A673 (cell line): ENCODE measurements at regions of chr14 and their contacts with region 1.

Region 1: GRCh38 chr14:65958664-65959562 is 527.3 kb upstream of the CCDC196 start:
- DNase-seq: peak; percentile 45
- H3K4me3 ChIP-seq: no peak overlapping the region
- H3K27ac ChIP-seq: no peak overlapping the region
- H3K4me1 ChIP-seq: no peaks in the 10 kb centered on the region
- H3K27me3 ChIP-seq: no peaks in the 10 kb centered on the region
- CTCF ChIP-seq: peak; percentile 59

Region 2: GRCh38 chr14:65824285-65824977 is 134.5 kb before region 1 on chr14:
- CTCF ChIA-PET with region 1: no interaction called
- POLR2A ChIA-PET with region 1: no interaction called
- intact Hi-C with region 1: loop called (anchors 5 kb)
- DNase-seq: peak; percentile 70
- H3K4me3 ChIP-seq: no peak overlapping the region
- H3K27ac ChIP-seq: no peak overlapping the region
- H3K4me1 ChIP-seq: no peaks in the 10 kb centered on the region
- H3K27me3 ChIP-seq: peaks cover 17% of the 10 kb centered on the region
- CTCF ChIP-seq: peak; percentile 92

Region 3: DNA sequence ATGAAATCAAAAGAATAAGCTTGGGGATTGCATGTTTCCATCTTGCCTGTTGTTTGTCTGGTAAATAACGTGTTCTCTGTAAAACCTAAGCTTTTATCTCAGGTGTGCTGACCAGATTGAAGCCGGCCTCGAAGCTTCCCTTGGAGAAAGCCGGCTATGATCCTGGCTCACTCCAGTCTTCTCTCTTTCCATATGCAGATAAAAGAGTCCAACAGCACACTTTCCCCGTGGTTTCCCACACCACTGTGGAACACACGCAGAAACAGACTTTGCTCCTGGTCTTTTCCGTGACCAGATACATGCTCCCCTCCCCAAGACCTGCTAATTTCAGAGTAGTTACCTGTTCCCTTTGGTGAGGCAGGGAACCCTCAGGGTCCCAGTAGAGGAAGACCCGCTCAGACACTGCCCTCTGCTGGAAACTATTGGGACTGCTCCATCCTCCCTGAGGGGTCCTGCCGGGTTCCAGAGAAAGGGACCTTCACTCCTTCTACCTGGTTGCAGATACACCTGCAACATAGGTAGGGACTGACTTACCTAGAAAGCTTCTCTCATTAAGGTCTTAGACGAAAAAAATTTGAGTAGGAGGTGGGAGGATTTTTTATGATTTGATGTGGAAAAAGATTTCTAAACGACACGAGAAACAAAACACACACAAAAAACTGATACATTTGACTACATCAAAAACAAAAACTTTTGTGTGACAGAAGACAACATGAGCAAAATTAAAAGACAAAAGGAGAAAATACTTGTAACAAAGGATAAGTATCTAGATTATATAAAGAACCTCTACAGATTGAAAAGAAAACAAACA is 111.8 kb after region 1 on chr14:
- CTCF ChIA-PET with region 1: interaction called, 4 read pairs
- POLR2A ChIA-PET with region 1: no interaction called
- intact Hi-C with region 1: loop called (anchors 1 kb)
- DNase-seq: peak; percentile 50
- H3K4me3 ChIP-seq: no peak overlapping the region
- H3K27ac ChIP-seq: no peak overlapping the region
- H3K4me1 ChIP-seq: no peaks in the 10 kb centered on the region
- H3K27me3 ChIP-seq: no peaks in the 10 kb centered on the region
- CTCF ChIP-seq: peak; percentile 90

Region 4: DNA sequence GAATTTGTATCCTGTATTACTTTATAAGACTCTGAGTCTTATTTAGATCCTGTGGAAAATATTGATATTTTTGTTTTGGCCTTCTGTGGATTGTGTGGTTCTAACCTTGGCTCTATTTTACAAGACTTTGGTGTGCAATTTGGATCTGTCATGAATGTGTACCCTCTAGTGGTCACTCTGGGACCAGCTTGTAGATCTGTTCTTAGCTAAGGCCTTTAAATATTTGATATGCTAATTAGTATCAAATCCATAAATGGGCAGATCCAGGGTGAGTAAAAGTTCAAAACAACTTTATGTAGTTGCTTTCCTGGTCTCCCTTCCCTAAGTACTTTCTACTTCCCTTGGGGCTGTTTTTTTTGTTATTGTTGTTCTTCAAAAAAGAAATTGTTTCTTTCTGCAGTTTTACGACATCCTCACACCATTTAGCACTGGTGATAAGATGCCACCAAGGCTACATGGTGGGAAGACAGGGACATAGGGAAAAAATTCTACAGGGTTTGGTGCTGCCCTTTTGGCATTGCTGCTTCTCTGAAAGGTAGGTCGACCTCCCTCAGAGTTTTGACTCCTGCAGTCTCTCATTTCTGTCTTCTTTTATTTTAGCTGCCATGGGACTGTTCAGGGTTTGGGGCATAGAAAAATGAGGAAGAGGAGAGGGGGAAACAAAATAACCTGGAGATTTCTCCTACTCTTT is 787.5 kb after region 1 on chr14:
- CTCF ChIA-PET with region 1: no interaction called
- POLR2A ChIA-PET with region 1: no interaction called
- intact Hi-C with region 1: no loop called
- DNase-seq: peak; percentile 56
- H3K4me3 ChIP-seq: no peak overlapping the region
- H3K27ac ChIP-seq: no peak overlapping the region
- H3K4me1 ChIP-seq: no peaks in the 10 kb centered on the region
- H3K27me3 ChIP-seq: no peaks in the 10 kb centered on the region
- CTCF ChIP-seq: peak; percentile 66